Cardiac septum (tissue), 1 donor: ENCODE measurements at regions of chr17 and their contacts with region 1.

Region 1: GRCh38 chr17:55513885-55514591 is 2.8 kb upstream of the SMIM36 start:
- DNase-seq: no peak

Region 2: DNA sequence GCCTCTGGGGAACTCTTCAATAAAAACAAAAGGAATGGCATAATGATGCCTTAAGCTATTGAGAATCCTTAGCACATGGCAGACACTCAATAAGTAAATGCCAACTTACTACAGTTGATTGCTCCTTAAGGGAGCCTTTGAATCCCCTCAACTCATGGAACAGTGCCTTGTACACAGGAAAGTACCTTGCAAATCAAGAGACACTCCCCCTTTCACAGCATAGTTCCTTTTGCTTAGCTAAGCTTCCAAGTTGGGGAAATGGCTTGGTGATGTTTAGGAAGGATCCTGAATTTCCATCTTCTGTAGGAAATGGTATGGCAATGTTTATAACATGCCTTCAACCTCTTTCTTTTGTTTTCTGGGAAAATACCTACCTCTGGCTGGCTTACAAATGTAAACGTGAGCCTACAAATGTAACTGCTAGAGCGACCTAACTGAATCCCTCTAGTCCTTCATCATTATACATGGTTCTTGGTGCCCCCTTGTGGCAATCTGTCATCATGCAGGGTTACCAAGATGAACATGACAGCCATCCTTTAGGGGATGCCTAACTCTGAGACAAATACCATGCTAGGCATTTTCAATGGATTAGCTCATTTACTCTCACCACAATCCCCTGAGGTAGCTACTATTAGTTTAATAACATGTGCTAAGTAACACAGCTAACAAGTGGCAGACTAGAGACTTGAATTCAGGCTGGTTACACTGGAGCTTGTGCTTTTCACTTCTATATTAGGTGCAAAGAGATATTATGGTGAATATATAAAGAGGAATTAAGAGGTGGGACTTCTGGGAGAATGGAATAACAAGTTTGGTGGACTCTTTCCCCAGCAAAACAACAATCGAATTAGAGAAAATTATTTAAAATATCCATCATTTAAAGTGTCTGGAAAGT is 157.4 kb before region 1 on chr17:
- intact Hi-C with region 1: loop called (anchors 5 kb)
- DNase-seq: no peak

Region 3: GRCh38 chr17:55421179-55421934 is 92.7 kb before region 1 on chr17 and contains the start of gene MMD:
- intact Hi-C with region 1: loop called (anchors 10 kb)
- DNase-seq: peak; percentile 75
- total RNA-seq, gene MMD: 12.6 TPM